CD4-positive, alpha-beta T cell (primary cell): ENCODE measurements at regions of chr12 and their contacts with region 1.

Region 1: DNA sequence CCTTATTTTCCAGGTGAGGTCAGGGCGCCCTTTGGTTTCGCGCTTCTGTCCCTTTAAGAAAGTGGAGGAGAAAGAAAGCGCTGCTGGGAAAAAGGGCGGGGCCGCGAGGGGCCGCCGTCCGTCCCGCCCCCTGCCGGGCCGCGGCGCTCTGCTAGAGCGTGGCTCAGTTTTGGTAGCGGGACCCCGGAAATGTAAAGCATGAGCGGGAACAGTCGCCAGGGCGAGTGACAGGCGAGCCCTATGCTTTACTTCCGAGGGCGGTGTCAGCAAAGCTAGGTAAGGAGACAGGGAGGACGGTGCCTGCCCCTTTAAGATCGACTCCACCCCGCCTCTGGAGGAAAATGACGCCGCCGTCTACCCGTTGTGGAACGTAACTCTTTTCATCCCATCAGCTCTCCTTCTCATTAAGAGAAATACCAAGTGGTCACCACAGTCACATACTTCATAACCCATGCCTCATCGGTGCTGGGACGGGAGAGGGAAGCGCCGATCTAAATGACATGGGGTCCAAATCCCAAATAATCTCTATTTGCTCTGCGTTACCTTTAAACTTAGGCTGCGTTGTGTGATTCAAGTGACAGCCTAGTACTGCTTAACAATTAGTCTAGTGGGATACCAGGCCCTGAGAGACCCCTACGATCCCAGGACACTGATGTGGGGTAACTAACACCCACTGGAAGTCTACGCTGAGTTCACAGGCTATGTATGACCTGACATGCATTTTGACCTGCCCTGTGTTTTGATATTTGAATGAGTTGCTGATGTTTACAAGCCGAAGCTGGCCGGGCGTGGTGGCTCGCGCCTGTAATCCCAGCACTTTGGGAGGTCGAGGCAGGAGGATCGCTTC is at the start of gene ETFBKMT:
- DNase-seq: peak; percentile 83 to 97 (median 90)
- ATAC-seq: peak; percentile 97
- H3K4me3 ChIP-seq: peak within 1 kb of the TSS; percentile 68
- H3K4me3 Mint-ChIP-seq: peak within 1 kb of the TSS; percentile 99
- H3K27ac ChIP-seq: peak within 1 kb of the TSS; percentile 68 to 91
- H3K27ac Mint-ChIP-seq: peak within 1 kb of the TSS; percentile 97
- H3K4me1 ChIP-seq: peaks cover 12% of the 10 kb centered on the region
- H3K4me1 Mint-ChIP-seq: peaks cover 19% of the 10 kb centered on the region
- H3K27me3 ChIP-seq: no peaks in the 10 kb centered on the region
- H3K27me3 Mint-ChIP-seq: no peaks in the 10 kb centered on the region
- CTCF ChIP-seq: no peak
- total RNA-seq, gene ETFBKMT: 0.38 to 0.92 TPM

Region 2: DNA sequence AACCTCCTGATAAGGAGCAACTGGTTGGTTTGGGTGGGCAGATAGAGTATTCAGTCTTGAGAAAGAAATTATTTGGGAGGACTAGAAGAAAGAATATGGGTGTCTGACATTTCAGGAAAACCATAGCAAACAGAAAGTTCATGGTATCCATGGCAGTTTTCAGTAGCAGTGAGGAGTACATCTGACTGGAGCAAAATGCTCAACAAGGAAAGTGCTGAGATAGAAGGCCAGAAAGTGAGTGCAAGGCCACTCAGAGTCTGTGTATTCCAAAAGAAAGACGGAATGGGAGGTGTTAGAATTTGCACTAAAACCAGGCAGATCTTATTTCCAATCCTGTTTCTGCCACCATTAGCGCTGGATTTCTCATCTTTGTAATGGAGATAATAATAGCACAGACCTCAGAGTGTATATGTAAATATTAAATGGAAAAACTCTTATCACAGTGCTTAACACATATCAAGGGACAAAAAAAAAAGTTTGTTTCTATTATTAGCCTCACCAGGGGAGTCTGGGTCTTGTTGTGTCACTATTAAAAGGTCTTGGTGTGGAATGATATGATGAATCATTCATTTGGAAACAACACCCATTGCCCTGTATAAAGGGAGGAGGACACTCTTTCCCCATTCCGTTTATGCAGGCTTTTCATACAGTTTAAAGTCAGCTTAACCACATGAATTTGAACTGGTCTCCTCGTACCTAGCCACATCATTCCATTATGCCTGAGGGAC is 1313.4 kb before region 1 on chr12:
- CTCF ChIA-PET with region 1: no interaction called
- POLR2A ChIA-PET with region 1: no interaction called
- intact Hi-C with region 1: no loop called
- DNase-seq: no peak
- ATAC-seq: no peak
- H3K4me3 ChIP-seq: no peak overlapping the region
- H3K4me3 Mint-ChIP-seq: no peak overlapping the region
- H3K27ac ChIP-seq: no peak overlapping the region
- H3K27ac Mint-ChIP-seq: no peak overlapping the region
- H3K4me1 ChIP-seq: no peaks in the 10 kb centered on the region
- H3K4me1 Mint-ChIP-seq: no peaks in the 10 kb centered on the region
- H3K27me3 ChIP-seq: no peaks in the 10 kb centered on the region
- H3K27me3 Mint-ChIP-seq: no peaks in the 10 kb centered on the region
- CTCF ChIP-seq: no peak

Region 3: DNA sequence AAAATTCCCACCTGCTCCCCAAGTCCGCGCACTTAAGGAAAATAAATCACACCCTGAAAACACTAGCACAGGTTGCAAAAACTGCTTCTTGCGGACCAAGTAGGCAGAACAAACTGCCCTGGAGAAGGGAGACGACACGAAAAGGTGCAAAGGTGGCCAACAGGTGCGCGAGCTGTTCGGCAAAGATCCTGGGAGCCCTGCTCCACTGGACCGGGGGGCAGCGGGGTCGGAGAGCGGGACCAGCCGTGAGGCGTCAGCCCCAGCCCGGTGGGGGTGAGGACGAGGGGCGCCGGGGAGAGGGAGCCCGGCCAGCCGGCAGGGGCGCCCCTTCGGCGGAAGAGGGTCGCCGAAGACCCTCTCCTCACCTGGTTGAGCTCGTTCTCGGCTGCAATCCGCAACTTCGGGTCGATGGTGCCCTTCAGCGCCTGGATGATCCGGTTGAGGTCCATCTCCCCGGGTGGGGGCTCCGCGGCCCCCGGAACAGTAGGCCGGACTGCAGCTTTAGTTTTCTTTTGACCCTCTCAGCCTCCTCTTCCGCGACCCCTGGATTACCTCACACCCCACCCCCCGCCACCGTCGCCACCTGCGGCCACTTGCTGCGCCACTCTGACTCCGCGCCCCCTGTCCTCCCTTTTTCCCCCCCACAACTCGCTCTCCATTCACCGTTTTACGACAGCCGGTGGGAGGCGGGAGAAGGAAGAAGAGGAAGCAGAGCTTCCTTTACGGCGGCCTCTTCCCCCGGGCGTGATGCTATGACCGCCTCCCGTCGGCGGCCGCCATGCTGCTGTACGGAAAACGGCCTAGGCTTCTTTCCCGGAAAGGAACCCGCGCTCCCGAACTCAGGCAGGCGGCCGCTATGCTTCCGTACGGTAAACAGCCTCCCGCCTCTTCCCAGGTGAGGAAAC is 963.9 kb before region 1 on chr12 and contains the start of gene IPO8:
- CTCF ChIA-PET with region 1: no interaction called
- POLR2A ChIA-PET with region 1: no interaction called
- intact Hi-C with region 1: loop called in 1 of 2 experiments (anchors 5 kb)
- DNase-seq: peak; percentile 69 to 93 (median 82)
- ATAC-seq: peak; percentile 94
- H3K4me3 ChIP-seq: peak within 1 kb of the TSS; percentile 90
- H3K4me3 Mint-ChIP-seq: peak within 1 kb of the TSS; percentile 100
- H3K27ac ChIP-seq: peak within 1 kb of the TSS; percentile 61 to 64
- H3K27ac Mint-ChIP-seq: peak within 1 kb of the TSS; percentile 90
- H3K4me1 ChIP-seq: peaks cover 30% of the 10 kb centered on the region
- H3K4me1 Mint-ChIP-seq: peaks cover 54% of the 10 kb centered on the region
- H3K27me3 ChIP-seq: no peaks in the 10 kb centered on the region
- H3K27me3 Mint-ChIP-seq: no peaks in the 10 kb centered on the region
- CTCF ChIP-seq: peak; percentile 56
- total RNA-seq, gene IPO8: 17.2 to 17.5 TPM

Region 4: GRCh38 chr12:31325877-31326631 is 333.3 kb before region 1 on chr12 and contains the start of gene SINHCAF:
- CTCF ChIA-PET with region 1: no interaction called
- POLR2A ChIA-PET with region 1: interaction called, 3 read pairs
- intact Hi-C with region 1: loop called (anchors 5 to 10 kb)
- DNase-seq: peak; percentile 96 to 100 (median 99)
- ATAC-seq: peak; percentile 52
- H3K4me3 ChIP-seq: peak within 1 kb of the TSS; percentile 99
- H3K4me3 Mint-ChIP-seq: peak within 1 kb of the TSS; percentile 92
- H3K27ac ChIP-seq: peak within 1 kb of the TSS; percentile 77 to 95
- H3K27ac Mint-ChIP-seq: peak within 1 kb of the TSS; percentile 85
- H3K4me1 ChIP-seq: peaks cover 27% of the 10 kb centered on the region
- H3K4me1 Mint-ChIP-seq: peaks cover 32% of the 10 kb centered on the region
- H3K27me3 ChIP-seq: no peaks in the 10 kb centered on the region
- H3K27me3 Mint-ChIP-seq: no peaks in the 10 kb centered on the region
- CTCF ChIP-seq: no peak
- total RNA-seq, gene SINHCAF: 103 to 119 TPM

Region 5: GRCh38 chr12:31612819-31613218 is 46.5 kb before region 1 on chr12:
- CTCF ChIA-PET with region 1: no interaction called
- POLR2A ChIA-PET with region 1: no interaction called
- intact Hi-C with region 1: no loop called
- DNase-seq: no peak
- ATAC-seq: no peak
- H3K4me3 ChIP-seq: no peak overlapping the region
- H3K4me3 Mint-ChIP-seq: no peak overlapping the region
- H3K27ac ChIP-seq: no peak overlapping the region
- H3K27ac Mint-ChIP-seq: no peak overlapping the region
- H3K4me1 ChIP-seq: no peaks in the 10 kb centered on the region
- H3K4me1 Mint-ChIP-seq: no peaks in the 10 kb centered on the region
- H3K27me3 ChIP-seq: peaks cover 0 to 1% of the 10 kb centered on the region in 2 experiments
- H3K27me3 Mint-ChIP-seq: peaks cover 3% of the 10 kb centered on the region
- CTCF ChIP-seq: no peak

Region 6: GRCh38 chr12:31728917-31729640 is 69.8 kb after region 1 on chr12 and contains the start of gene AMN1:
- CTCF ChIA-PET with region 1: interaction called, 17 read pairs
- POLR2A ChIA-PET with region 1: interaction called, 22 read pairs
- intact Hi-C with region 1: loop called (anchors 2 kb)
- DNase-seq: peak; percentile 95 to 99 (median 98)
- ATAC-seq: peak; percentile 88
- H3K4me3 ChIP-seq: peak within 1 kb of the TSS; percentile 81
- H3K4me3 Mint-ChIP-seq: peak within 1 kb of the TSS; percentile 93
- H3K27ac ChIP-seq: peak within 1 kb of the TSS; percentile 82 to 94
- H3K27ac Mint-ChIP-seq: peak within 1 kb of the TSS; percentile 97
- H3K4me1 ChIP-seq: peaks cover 40% of the 10 kb centered on the region
- H3K4me1 Mint-ChIP-seq: peaks cover 68% of the 10 kb centered on the region
- H3K27me3 ChIP-seq: no peaks in the 10 kb centered on the region
- H3K27me3 Mint-ChIP-seq: no peaks in the 10 kb centered on the region
- CTCF ChIP-seq: peak; percentile 21
- total RNA-seq, gene AMN1: 6.9 to 8.5 TPM

Region 7: GRCh38 chr12:32106517-32107358 is 447.4 kb after region 1 on chr12 and contains the start of gene BICD1:
- CTCF ChIA-PET with region 1: interaction called, 3 read pairs
- POLR2A ChIA-PET with region 1: no interaction called
- intact Hi-C with region 1: loop called in 1 of 2 experiments (anchors 5 kb)
- DNase-seq: peak; percentile 39 to 89 (median 66)
- ATAC-seq: peak; percentile 82
- H3K4me3 ChIP-seq: peak within 1 kb of the TSS; percentile 86
- H3K4me3 Mint-ChIP-seq: peak within 1 kb of the TSS; percentile 97
- H3K27ac ChIP-seq: peak within 1 kb of the TSS in 1 of 2 donors; percentile 9
- H3K27ac Mint-ChIP-seq: peak within 1 kb of the TSS; percentile 73
- H3K4me1 ChIP-seq: peaks cover 15% of the 10 kb centered on the region
- H3K4me1 Mint-ChIP-seq: peaks cover 35% of the 10 kb centered on the region
- H3K27me3 ChIP-seq: no peaks in the 10 kb centered on the region
- H3K27me3 Mint-ChIP-seq: no peaks in the 10 kb centered on the region
- CTCF ChIP-seq: peak; percentile 24
- total RNA-seq, gene BICD1: 13.5 to 14.3 TPM

Region 8: DNA sequence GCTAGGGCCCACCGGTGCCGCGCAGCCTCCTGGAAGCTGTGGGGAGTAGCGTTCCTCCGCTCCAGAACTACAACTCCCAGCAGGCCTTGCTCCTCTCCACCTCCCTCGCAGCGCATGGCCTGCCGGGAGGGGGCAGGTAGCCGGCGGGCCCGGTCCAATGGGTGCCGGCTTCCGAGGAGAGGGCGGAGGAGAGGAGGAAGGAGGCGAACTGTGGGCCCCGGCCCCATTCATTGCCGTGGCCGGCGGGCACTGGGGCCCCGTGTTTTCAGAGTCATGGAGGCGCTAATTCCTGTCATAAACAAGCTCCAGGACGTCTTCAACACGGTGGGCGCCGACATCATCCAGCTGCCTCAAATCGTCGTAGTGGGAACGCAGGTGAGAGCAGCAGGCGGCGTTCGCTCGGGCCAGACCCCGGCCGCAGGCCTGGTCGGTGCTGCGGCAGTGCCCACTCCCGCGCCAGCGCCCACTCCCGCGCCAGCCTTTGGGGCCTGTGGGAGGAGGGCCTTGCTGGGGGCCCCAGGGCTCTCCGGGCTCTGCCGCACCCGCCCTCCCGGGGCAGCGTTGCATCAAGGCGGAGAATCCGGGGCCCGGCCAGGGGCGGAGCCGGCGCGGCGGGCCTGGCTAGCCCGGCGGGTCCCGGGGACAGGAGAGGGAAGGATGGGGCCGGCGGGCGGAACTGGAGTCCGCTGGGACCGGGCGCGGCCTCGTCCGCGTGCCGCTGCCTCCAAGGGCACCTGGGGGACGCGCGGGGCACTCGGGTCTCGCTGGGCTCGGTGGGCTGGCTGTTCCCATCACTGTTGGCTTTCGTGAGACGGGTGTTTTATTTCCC is 1020.0 kb after region 1 on chr12 and contains the start of gene DNM1L:
- CTCF ChIA-PET with region 1: no interaction called
- POLR2A ChIA-PET with region 1: no interaction called
- intact Hi-C with region 1: loop called (anchors 2 to 5 kb)
- DNase-seq: peak; percentile 84 to 96 (median 90)
- ATAC-seq: peak; percentile 98
- H3K4me3 ChIP-seq: peak within 1 kb of the TSS; percentile 79
- H3K4me3 Mint-ChIP-seq: peak within 1 kb of the TSS; percentile 94
- H3K27ac ChIP-seq: peak within 1 kb of the TSS; percentile 67 to 73
- H3K27ac Mint-ChIP-seq: peak within 1 kb of the TSS; percentile 84
- H3K4me1 ChIP-seq: peaks cover 11% of the 10 kb centered on the region
- H3K4me1 Mint-ChIP-seq: peaks cover 36% of the 10 kb centered on the region
- H3K27me3 ChIP-seq: no peaks in the 10 kb centered on the region
- H3K27me3 Mint-ChIP-seq: no peaks in the 10 kb centered on the region
- CTCF ChIP-seq: no peak
- total RNA-seq, gene DNM1L: 70.9 to 74.6 TPM